ENCODE measurements at regions of chr20 and their contacts with region 1.

Region 1: DNA sequence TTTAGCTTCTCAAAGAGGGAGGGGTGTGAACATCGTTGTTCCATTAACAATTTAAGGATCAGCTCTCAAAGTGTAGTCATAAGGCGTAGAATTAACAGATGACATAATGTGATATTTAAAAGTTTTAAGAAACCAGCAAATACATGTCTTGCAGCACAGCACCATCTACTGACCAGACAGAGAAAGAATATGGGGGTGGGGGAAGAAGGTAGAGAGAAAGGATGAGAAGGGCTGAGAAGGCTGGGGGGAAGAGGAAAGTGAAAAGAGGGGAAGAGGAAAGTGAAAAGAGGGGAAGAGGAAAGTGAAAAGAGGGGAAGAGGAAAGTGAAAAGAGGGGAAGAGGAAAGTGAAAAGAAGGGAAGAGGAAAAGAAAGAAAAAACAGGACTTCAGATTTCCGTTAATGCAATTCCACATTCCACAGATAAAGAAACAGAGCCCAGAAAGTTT is 80.9 kb downstream of the HAO1 start:
- DNase-seq: no peak

Region 2: DNA sequence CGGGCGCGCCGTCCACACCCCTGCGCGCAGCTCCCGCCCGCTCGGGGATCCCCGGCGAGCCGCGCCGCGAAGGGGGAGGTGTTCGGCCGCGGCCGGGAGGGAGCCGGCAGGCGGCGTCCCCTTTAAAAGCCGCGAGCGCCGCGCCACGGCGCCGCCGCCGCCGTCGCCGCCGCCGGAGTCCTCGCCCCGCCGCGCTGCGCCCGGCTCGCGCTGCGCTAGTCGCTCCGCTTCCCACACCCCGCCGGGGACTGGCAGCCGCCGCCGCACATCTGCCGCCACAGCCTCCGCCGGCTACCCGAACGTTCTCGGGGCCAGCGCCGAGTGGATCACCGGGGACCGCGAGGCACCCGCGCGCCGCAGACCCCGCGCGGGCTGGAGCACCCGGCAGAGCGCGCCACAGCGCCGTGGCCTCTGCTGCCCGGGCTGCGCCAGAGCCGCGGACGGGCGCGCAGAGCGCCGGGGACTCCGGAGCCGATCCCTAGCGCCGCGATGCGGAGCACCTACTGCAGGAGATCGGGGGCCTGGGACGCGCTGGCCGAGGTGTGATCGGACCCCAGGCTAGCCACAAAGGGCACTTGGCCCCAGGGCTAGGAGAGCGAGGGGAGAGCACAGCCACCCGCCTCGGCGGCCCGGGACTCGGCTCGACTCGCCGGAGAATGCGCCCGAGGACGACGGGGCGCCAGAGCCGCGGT is 1091.7 kb before region 1 on chr20 and contains the start of gene BMP2:
- intact Hi-C with region 1: loop called (anchors 5 kb)
- DNase-seq: peak; percentile 77
- total RNA-seq, gene BMP2: 3.0 TPM

Region 3: DNA sequence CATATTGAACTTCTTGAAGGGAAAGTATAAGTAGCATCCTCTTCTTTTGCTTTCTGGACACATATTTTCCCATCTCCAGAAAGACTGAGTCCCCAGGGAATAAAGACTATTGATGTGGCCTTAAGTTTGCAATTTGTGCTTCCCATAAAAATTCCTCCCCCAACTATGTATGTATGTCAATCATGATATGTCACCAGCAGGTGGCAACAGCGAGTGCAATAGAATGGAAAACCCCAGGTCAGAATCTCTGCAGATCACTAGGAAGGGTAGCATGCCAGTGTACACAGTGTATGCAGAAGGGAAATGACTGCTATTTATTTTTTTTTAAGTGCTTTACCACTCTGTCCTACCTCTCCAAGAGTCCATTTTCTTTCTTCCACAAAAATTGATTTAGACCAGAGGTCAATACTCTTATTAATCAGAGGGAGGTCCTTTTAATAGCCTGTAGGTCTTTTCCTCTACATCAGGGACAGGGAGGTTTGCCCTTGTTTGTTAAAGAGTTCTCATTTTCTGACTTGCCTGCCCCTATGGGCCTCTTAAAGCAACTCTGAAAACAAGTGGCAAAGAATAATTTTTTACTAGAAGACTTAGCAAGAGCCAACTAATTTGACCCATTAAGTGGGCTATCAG is 1030.5 kb before region 1 on chr20:
- intact Hi-C with region 1: loop called (anchors 5 kb)
- DNase-seq: no peak

Region 4: DNA sequence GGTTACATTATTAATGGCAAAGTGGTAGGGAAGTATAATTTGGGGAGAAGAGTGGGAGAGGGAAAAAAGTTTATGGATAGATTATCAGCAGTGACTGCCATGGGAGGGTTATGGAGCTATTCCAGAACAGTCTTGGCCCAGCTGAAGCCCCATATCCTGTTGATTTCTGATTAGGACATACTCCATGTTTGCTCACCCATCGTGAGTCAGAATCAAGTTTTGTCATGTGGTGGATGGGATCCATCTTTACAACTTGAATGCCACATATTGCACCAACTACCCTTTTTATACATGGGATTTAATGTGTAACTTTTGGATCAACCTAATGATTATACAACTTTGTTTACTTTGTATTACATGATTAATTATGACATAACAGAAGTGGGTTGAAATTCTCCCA is 136.1 kb before region 1 on chr20:
- intact Hi-C with region 1: loop called (anchors 10 kb)
- DNase-seq: no peak

Region 5: DNA sequence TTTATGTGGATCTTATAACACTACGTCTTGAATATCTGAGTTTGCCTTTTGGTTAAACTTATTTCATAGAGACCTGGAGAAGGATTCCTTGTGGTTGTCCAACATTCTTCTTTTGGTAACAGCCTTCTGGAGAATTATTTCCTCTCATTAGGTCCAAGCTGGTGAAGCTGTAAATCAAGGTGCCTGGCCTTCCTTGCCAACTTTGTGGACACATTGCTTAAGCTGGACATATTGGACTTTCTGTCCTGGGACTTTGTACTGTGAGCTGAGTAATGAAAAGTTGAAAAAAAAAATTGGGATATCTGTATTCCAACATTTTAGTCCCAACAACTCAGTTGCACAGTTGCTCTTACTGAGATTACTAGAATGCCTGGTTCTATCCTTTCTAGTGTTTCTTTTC is 105.3 kb before region 1 on chr20:
- intact Hi-C with region 1: no loop called
- DNase-seq: no peak

Region 6: GRCh38 chr20:7989379-7989778 is 130.0 kb after region 1 on chr20:
- intact Hi-C with region 1: no loop called
- DNase-seq: no peak